Heart right ventricle (tissue), 16 donors: ENCODE measurements at regions of chr3 and their contacts with region 1.

Region 1: GRCh38 chr3:56988458-56989168 is 71.9 kb upstream of the SPATA12 start:
- DNase-seq: peak; percentile 65 to 87
- ATAC-seq: peak; percentile 81 to 93 (median 89)
- H3K4me3 ChIP-seq: peak overlapping the region in 3 of 10 donors; percentile 6 to 17 (median 15)
- H3K27ac ChIP-seq: peak overlapping the region in 3 of 10 donors; percentile 20 to 32 (median 23)
- H3K4me1 ChIP-seq: peaks cover 0 to 42% (median 32%) of the 10 kb centered on the region in 9 donors
- H3K27me3 ChIP-seq: peaks cover 0 to 15% (median 0%) of the 10 kb centered on the region in 7 donors
- CTCF ChIP-seq: peak; percentile 75 to 90 (median 86)

Region 2: DNA sequence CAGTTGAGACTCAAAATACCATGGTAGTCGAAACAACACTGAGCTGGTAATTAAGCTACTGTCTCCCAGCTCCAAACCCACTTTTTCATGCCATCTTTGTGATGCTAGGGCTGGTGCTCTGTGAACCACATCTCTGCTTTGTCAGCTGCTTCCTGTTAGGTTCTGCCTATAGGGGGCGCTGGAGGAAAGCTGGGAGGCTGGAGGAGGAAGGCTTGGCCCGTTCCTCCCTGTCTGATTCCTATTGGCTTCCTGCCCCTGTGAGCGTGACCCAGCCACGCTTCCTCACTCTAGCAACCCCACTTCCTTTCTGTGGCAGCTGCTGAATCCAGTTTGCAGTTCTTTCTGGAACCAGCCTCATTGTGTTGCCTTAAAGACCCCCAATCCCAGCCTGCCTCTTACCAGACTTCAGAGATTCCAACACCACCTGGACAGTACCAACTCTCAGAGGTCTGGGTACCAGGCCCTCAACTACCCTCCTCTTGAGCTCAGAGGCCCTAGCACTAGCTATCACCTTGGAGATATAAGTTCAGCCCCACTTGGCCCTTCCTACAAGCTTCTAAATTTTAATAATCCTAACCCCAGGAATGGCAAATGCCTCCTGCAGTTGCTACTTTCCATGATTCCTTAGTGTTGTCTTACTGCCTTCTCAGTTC is 641.3 kb before region 1 on chr3:
- intact Hi-C with region 1: loop called in 2 of 10 experiments (anchors 10 kb)
- DNase-seq: peak in 1 of 2 donors; percentile 5
- ATAC-seq: peak in 1 of 8 donors; percentile 33
- H3K4me3 ChIP-seq: no peak overlapping the region
- H3K27ac ChIP-seq: no peak overlapping the region
- H3K4me1 ChIP-seq: no peaks in the 10 kb centered on the region
- H3K27me3 ChIP-seq: peaks cover 0 to 12% (median 0%) of the 10 kb centered on the region in 7 donors
- CTCF ChIP-seq: peak in 5 of 9 donors; percentile 22 to 39 (median 30)

Region 3: GRCh38 chr3:56645407-56645806 is 343.2 kb before region 1 on chr3:
- intact Hi-C with region 1: no loop called
- DNase-seq: no peak
- ATAC-seq: no peak
- H3K4me3 ChIP-seq: no peak overlapping the region
- H3K27ac ChIP-seq: no peak overlapping the region
- H3K4me1 ChIP-seq: peaks cover 0 to 17% (median 4%) of the 10 kb centered on the region in 9 donors
- H3K27me3 ChIP-seq: no peaks in the 10 kb centered on the region
- CTCF ChIP-seq: no peak

Region 4: GRCh38 chr3:56702490-56703315 is 285.9 kb before region 1 on chr3:
- intact Hi-C with region 1: loop called (anchors 1 to 2 kb)
- DNase-seq: peak in 1 of 2 donors; percentile 57
- ATAC-seq: peak in 7 of 8 donors; percentile 52 to 75 (median 75)
- H3K4me3 ChIP-seq: no peak overlapping the region
- H3K27ac ChIP-seq: no peak overlapping the region
- H3K4me1 ChIP-seq: peaks cover 0 to 4% (median 0%) of the 10 kb centered on the region in 9 donors
- H3K27me3 ChIP-seq: no peaks in the 10 kb centered on the region
- CTCF ChIP-seq: peak; percentile 73 to 96 (median 90)

Region 5: DNA sequence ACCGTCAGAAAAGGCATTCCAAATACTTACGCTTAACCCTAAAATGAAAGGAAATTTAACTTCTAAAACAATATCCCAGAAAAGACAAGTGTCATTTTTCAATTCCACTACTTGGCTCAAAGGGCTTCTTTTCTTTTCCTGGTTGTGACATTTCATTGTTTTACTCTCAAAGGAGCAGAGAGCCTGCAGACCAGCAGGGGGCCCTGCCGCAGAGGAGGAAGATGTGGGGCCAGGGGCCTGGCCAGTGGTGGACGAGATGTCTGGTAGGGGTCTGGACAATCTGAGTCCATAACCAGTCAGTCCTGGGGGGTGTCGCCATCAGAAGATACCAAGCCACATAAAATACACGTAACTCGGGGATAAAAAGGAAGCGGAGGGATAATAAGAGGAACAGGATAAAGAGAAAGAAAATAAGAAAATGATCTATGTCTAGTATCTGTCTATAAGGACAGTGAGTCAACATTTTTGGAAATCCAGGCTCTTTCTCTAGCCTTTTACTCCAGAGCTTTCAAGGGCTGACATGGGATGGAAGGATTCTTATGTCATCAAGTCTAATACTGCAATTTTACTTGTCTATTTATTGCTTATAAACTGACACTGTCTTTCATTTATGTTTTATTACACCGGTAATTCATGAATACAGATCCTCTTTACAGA is 132.6 kb before region 1 on chr3:
- intact Hi-C with region 1: loop called in 4 of 10 experiments (anchors 5 to 10 kb)
- DNase-seq: peak; percentile 15 to 34
- ATAC-seq: peak in 4 of 8 donors; percentile 47 to 78 (median 58)
- H3K4me3 ChIP-seq: no peak overlapping the region
- H3K27ac ChIP-seq: peak overlapping the region in 1 of 10 donors; percentile 45
- H3K4me1 ChIP-seq: peaks cover 0 to 20% (median 0%) of the 10 kb centered on the region in 9 donors
- H3K27me3 ChIP-seq: no peaks in the 10 kb centered on the region
- CTCF ChIP-seq: peak; percentile 17 to 75 (median 54)

Region 6: GRCh38 chr3:56923521-56924224 is 64.9 kb before region 1 on chr3:
- intact Hi-C with region 1: loop called in 2 of 10 experiments (anchors 5 to 10 kb)
- DNase-seq: peak in 1 of 2 donors; percentile 74
- ATAC-seq: peak; percentile 64 to 88 (median 84)
- H3K4me3 ChIP-seq: no peak overlapping the region
- H3K27ac ChIP-seq: peak overlapping the region in 9 of 10 donors; percentile 41 to 86 (median 73)
- H3K4me1 ChIP-seq: peaks cover 22 to 84% (median 74%) of the 10 kb centered on the region in 9 donors
- H3K27me3 ChIP-seq: no peaks in the 10 kb centered on the region
- CTCF ChIP-seq: no peak

Region 7: GRCh38 chr3:57078344-57078634 is 89.7 kb after region 1 on chr3:
- intact Hi-C with region 1: loop called in 4 of 10 experiments (anchors 5 to 10 kb)
- DNase-seq: peak; percentile 36 to 48
- ATAC-seq: peak in 7 of 8 donors; percentile 36 to 76 (median 44)
- H3K4me3 ChIP-seq: peak overlapping the region; percentile 52 to 85 (median 76)
- H3K27ac ChIP-seq: peak overlapping the region in 6 of 10 donors; percentile 16 to 58 (median 43)
- H3K4me1 ChIP-seq: peaks cover 0 to 15% (median 12%) of the 10 kb centered on the region in 9 donors
- H3K27me3 ChIP-seq: peaks cover 0 to 48% (median 0%) of the 10 kb centered on the region in 7 donors
- CTCF ChIP-seq: no peak